Transverse colon (tissue), 4 donors: ENCODE measurements at regions of chr18 and their contacts with region 1.

Region 1: DNA sequence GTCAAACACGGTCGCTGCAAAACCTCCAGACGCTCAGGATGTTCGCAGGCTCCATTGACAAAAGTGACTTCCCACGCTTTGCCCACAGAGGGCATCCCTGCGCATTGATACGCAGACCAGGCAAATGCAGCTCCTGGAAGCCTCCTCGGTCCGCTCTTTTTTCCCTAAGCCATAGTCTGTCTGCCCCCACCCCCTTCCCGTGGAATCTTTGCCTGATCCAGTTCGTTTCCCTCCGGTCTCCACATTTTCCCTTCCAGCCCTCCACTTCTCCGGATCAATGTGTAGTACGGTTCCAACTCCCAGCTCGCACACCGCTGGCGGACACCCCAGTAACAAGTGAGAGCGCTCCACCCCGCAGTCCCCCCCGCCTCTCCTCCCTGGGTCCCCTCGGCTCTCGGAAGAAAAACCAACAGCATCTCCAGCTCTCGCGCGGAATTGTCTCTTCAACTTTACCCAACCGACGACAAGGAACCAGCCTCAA is at the start of gene DCC:
- DNase-seq: peak; percentile 34
- H3K4me3 ChIP-seq: peak within 1 kb of the TSS in 3 of 4 donors; percentile 13 to 27 (median 18)
- H3K27ac ChIP-seq: no peak within 1 kb of the TSS
- H3K4me1 ChIP-seq: peaks cover 0 to 3% (median 0%) of the 10 kb centered on the region in 4 donors
- H3K27me3 ChIP-seq: peaks cover 53% of the 10 kb centered on the region
- CTCF ChIP-seq: peak in 4 of 5 experiments; percentile 17 to 33 (median 26)
- EP300 ChIP-seq: no peak
- POLR2A ChIP-seq: no peak
- total RNA-seq, gene DCC: 0.27 to 2.5 TPM in 2 of 4 donors, not detected in the others

Region 2: DNA sequence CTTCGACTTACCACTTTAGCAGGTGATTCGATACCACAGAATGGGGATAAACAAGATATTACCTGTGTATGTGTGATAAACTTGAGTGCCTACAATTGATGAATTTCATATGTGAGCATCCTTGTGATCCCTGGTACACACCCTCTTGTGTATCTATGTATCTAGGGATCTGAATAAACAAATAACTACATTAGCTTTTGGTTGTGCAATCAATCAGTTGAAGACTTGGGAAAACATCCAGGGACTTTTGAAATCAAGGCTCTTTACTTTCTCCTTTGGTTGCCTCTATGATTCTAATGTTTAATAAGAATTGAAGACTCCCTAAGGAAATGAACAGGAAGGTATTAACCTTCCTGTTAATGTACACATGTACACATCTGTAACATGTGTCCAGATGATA is 97.2 kb before region 1 on chr18:
- in situ Hi-C with region 1: no loop called
- intact Hi-C with region 1: no loop called
- DNase-seq: no peak
- H3K4me3 ChIP-seq: no peak overlapping the region
- H3K27ac ChIP-seq: no peak overlapping the region
- H3K4me1 ChIP-seq: no peaks in the 10 kb centered on the region
- H3K27me3 ChIP-seq: no peaks in the 10 kb centered on the region
- CTCF ChIP-seq: no peak
- EP300 ChIP-seq: no peak
- POLR2A ChIP-seq: no peak

Region 3: DNA sequence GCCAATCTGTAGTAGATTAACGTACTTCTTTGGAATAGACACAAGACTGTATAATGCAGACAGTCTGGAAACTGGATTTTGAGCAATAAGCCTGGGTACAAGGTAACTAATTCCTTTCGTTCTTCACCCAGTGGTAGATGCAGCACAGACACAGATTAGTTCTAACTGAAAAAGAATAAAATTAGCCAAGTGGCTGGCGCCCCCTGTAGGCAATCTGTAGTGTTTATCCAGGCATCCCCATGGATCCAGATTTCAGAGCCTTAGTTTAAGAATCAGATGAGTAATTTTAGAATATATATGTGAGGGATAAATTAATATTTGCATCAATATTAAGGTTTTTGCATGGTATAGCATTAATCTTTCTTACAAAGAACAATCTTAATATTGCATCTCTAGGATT is 563.9 kb after region 1 on chr18:
- in situ Hi-C with region 1: loop called in 1 of 4 experiments (anchors 25 kb)
- intact Hi-C with region 1: no loop called
- DNase-seq: peak; percentile 69
- H3K4me3 ChIP-seq: no peak overlapping the region
- H3K27ac ChIP-seq: no peak overlapping the region
- H3K4me1 ChIP-seq: no peaks in the 10 kb centered on the region
- H3K27me3 ChIP-seq: no peaks in the 10 kb centered on the region
- CTCF ChIP-seq: peak; percentile 64 to 73 (median 70)
- EP300 ChIP-seq: no peak
- POLR2A ChIP-seq: no peak